ENCODE measurements at regions of chr7 and their contacts with region 1.

Region 1: GRCh38 chr7:92904292-92905131 is 68.1 kb upstream of the CDK6 start:
- DNase-seq: peak; percentile 81
- H3K4me3 Mint-ChIP-seq: peak overlapping the region; percentile 20
- H3K27ac Mint-ChIP-seq: peak overlapping the region; percentile 92
- H3K4me1 Mint-ChIP-seq: peaks cover 21% of the 10 kb centered on the region
- H3K27me3 Mint-ChIP-seq: no peaks in the 10 kb centered on the region

Region 2: GRCh38 chr7:92682903-92683539 is 221.5 kb before region 1 on chr7:
- intact Hi-C with region 1: loop called (anchors 5 kb)
- DNase-seq: no peak
- H3K4me3 Mint-ChIP-seq: peak overlapping the region; percentile 60
- H3K27ac Mint-ChIP-seq: peak overlapping the region; percentile 93
- H3K4me1 Mint-ChIP-seq: peaks cover 84% of the 10 kb centered on the region
- H3K27me3 Mint-ChIP-seq: no peaks in the 10 kb centered on the region

Region 3: DNA sequence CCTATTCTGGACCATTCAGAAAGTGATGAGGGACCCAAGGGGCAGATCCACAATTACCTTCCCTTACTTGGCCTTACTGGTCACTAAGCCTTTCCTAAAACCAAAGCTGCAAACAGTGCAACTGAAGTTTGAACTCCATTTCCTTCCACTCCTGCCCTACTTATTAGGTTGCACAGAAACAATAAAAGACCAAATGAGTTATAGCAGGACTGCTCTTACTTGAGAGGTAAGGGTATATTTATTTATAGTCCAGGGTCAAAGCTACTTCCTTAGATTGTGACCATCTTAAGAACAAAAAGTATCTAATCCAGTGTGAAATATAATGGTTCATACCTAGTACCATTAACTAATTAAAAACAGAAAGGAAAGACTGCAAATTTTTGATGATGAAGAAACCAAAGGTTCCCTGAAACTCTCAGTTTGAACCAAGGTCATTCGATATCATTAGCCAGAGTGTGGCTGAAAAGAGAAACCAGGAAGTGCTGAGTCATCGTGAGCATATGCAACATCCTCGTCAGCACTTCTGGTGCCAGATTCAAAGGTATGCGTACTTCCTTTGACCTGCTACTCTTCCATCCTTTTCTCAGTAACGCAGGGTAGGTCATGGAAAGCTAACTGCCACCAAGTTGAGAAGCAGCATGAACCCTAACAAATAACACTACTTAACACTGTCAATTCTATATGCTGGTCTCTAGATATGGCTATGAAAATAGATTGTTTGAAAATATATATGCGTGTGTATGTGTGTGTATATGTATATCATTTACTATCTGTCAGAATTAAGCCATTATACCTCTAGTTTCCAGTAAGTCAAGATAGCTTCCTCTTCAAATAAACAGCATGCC is 94.9 kb before region 1 on chr7:
- intact Hi-C with region 1: loop called (anchors 1 kb)
- DNase-seq: peak; percentile 71
- H3K4me3 Mint-ChIP-seq: peak overlapping the region; percentile 61
- H3K27ac Mint-ChIP-seq: peak overlapping the region; percentile 91
- H3K4me1 Mint-ChIP-seq: peaks cover 71% of the 10 kb centered on the region
- H3K27me3 Mint-ChIP-seq: no peaks in the 10 kb centered on the region

Region 4: GRCh38 chr7:92875719-92876118 is 28.8 kb before region 1 on chr7:
- intact Hi-C with region 1: loop called (anchors 1 kb)
- DNase-seq: no peak
- H3K4me3 Mint-ChIP-seq: no peak overlapping the region
- H3K27ac Mint-ChIP-seq: peak overlapping the region; percentile 50
- H3K4me1 Mint-ChIP-seq: peaks cover 50% of the 10 kb centered on the region
- H3K27me3 Mint-ChIP-seq: no peaks in the 10 kb centered on the region

Region 5: DNA sequence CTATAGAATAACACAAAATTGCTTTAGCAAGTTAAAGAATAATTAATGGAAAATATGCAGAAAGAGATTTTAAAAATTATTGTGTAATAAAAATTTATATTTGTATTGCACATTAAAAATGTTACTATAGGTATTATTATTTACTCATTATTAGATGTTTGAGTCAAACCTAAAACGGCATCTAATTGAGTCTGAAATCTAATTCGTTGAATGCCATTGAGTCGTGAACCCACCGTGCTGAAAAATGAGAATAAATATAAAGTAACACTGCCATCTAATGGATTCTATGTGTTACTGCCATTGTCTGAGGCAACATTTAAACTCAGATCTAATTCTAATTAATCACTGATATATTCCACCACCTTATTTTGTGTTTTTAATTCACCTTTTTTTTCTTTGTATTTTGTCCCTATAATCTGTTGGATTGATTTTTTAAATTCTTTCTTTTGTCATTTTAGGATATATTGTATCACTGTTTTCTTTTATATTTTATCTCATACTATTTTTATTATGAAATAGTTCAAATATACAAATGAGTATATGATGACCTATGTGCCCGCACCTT is 151.1 kb after region 1 on chr7:
- intact Hi-C with region 1: loop called (anchors 5 kb)
- DNase-seq: no peak
- H3K4me3 Mint-ChIP-seq: no peak overlapping the region
- H3K27ac Mint-ChIP-seq: no peak overlapping the region
- H3K4me1 Mint-ChIP-seq: peaks cover 21% of the 10 kb centered on the region
- H3K27me3 Mint-ChIP-seq: no peaks in the 10 kb centered on the region